ENCODE measurements at regions of chr6 and their contacts with region 1.

Region 1: GRCh38 chr6:108565893-108566292 is 5.2 kb downstream of the FOXO3 start:
- DNase-seq: no peak
- ATAC-seq: no peak
- H3K4me3 Mint-ChIP-seq: no peak overlapping the region
- H3K27ac Mint-ChIP-seq: peak overlapping the region; percentile 15
- H3K4me1 Mint-ChIP-seq: peaks cover 68% of the 10 kb centered on the region
- H3K27me3 Mint-ChIP-seq: peaks cover 11% of the 10 kb centered on the region

Region 2: GRCh38 chr6:108581237-108581931 is 15.5 kb after region 1 on chr6:
- CTCF ChIA-PET with region 1: interaction called, 4 read pairs
- POLR2A ChIA-PET with region 1: no interaction called
- intact Hi-C with region 1: loop called in 1 of 2 experiments (anchors 1 kb)
- DNase-seq: no peak
- ATAC-seq: peak; percentile 61
- H3K4me3 Mint-ChIP-seq: no peak overlapping the region
- H3K27ac Mint-ChIP-seq: no peak overlapping the region
- H3K4me1 Mint-ChIP-seq: peaks cover 45% of the 10 kb centered on the region
- H3K27me3 Mint-ChIP-seq: no peaks in the 10 kb centered on the region

Region 3: DNA sequence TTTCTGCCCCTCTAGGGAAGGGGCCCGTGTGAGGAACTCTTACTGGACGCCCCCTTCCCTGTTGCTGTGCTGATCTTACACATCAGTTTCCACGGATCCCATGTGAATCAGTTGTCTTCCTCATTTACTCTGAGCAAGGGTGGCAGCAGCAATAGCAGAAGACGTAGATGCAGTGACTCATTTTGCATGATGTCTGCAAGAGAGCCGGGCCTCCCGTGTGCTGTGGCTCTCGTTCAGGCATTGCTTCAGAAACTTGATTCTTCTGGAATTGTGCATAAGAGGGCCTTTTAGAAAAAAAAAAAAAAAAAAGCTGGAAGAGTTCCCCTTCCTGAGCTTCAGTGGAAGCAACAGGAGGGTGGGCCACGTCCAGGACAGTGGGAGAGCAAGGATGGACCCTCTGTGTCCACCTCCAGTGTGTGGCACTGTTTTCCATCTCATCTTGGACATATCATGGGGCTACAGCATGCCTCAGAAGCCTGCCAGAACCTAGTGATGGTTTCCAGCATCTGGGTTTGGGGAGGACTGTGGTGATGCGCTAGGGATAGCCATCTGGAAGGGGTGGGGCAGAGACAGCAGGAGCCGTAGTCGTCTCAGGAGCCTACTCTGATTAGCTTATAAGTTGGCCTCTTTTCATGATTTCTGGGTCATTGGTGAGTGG is 56.9 kb after region 1 on chr6:
- CTCF ChIA-PET with region 1: no interaction called
- POLR2A ChIA-PET with region 1: no interaction called
- intact Hi-C with region 1: loop called in 1 of 2 experiments (anchors 5 kb)
- DNase-seq: no peak
- ATAC-seq: no peak
- H3K4me3 Mint-ChIP-seq: no peak overlapping the region
- H3K27ac Mint-ChIP-seq: no peak overlapping the region
- H3K4me1 Mint-ChIP-seq: peaks cover 54% of the 10 kb centered on the region
- H3K27me3 Mint-ChIP-seq: no peaks in the 10 kb centered on the region

Region 4: DNA sequence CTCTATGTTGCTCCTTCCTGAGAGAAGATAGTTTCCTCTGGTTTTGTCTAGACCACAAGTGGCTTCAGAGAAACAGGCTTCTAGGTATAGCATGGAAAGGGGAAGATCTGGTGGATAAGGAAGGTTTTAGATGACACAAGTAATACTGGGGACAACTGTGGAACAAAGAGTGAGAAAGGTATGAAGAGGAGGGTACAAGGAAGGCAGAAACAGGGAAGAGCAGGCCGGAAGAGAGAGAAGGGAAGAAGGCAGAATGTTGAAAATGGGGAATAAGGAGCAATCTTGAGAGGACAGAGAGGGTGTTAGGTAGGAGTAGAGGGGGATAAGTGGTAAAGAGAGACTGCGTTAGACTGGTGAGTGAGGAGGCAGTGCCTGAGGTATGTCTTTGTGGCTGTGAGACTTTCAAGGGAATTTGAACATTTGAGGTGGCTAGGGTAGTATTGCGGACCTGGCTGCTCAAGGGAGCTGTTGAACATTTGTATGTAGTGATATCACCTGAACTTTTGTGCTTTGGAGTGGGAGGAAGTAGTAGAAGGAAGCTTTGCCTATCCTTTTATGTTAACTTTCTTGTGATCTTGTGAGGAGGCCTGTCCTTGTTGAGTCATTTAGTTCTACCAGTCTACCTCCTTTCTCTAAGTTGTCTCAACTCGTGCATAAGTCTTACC is 64.3 kb after region 1 on chr6:
- CTCF ChIA-PET with region 1: no interaction called
- POLR2A ChIA-PET with region 1: no interaction called
- intact Hi-C with region 1: loop called in 1 of 2 experiments (anchors 1 kb)
- DNase-seq: peak; percentile 14
- ATAC-seq: peak; percentile 93
- H3K4me3 Mint-ChIP-seq: no peak overlapping the region
- H3K27ac Mint-ChIP-seq: peak overlapping the region; percentile 8
- H3K4me1 Mint-ChIP-seq: peaks cover 59% of the 10 kb centered on the region
- H3K27me3 Mint-ChIP-seq: no peaks in the 10 kb centered on the region

Region 5: DNA sequence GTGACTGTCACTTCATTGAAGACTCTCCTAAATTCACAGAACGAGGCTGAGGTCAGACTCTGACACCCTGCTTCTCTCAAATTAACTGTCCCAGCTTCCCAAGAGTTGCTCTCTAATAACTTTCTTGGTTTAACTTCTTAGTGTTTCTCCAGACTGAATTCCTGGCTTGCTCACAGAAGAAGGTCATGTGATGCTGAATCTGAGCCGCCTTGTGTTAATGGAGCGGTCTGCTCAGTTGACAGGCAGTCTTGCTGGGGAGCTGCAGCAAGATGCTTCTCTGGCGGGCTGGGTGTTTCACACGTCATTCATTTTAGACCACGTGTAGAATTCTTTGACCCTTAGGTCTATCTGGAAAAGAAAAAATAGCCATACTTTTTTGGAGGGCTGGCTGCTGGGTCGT is 102.1 kb after region 1 on chr6:
- CTCF ChIA-PET with region 1: interaction called, 4 read pairs
- POLR2A ChIA-PET with region 1: no interaction called
- intact Hi-C with region 1: loop called (anchors 2 to 5 kb)
- DNase-seq: no peak
- ATAC-seq: no peak
- H3K4me3 Mint-ChIP-seq: no peak overlapping the region
- H3K27ac Mint-ChIP-seq: no peak overlapping the region
- H3K4me1 Mint-ChIP-seq: peaks cover 45% of the 10 kb centered on the region
- H3K27me3 Mint-ChIP-seq: no peaks in the 10 kb centered on the region

Measured in activated CD4-positive, alpha-beta T cell treated with anti-CD3 and anti-CD28 coated beads for 36 hours (primary cell).